ENCODE measurements at regions of chr1 and their contacts with region 1.

Region 1: DNA sequence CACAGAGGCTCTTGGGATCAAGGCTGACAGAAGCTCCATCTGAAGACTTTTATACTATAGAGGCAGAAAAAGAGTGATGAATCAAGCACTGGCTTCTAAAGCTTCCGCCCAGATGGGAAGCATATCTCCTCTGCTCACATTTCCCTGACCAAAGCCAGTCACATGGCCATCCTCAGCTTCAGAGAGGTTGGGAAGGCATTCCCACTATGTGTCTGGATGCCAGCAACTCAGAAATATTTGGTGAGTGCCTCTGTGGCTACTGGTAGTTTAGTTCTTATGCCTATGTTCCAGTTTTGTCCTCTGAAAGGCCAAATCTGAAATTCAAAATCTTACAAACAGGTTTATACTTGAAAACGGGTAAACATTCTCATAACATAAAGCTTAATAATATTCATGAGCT is 9.9 kb upstream of the DISC1 start:
- DNase-seq: no peak
- ATAC-seq: no peak
- H3K4me3 ChIP-seq: no peak overlapping the region
- H3K27ac ChIP-seq: no peak overlapping the region
- H3K4me1 ChIP-seq: no peaks in the 10 kb centered on the region
- CTCF ChIP-seq: no peak
- EP300 ChIP-seq: no peak
- POLR2A ChIP-seq: no peak
- RAD21 ChIP-seq: no peak

Region 2: DNA sequence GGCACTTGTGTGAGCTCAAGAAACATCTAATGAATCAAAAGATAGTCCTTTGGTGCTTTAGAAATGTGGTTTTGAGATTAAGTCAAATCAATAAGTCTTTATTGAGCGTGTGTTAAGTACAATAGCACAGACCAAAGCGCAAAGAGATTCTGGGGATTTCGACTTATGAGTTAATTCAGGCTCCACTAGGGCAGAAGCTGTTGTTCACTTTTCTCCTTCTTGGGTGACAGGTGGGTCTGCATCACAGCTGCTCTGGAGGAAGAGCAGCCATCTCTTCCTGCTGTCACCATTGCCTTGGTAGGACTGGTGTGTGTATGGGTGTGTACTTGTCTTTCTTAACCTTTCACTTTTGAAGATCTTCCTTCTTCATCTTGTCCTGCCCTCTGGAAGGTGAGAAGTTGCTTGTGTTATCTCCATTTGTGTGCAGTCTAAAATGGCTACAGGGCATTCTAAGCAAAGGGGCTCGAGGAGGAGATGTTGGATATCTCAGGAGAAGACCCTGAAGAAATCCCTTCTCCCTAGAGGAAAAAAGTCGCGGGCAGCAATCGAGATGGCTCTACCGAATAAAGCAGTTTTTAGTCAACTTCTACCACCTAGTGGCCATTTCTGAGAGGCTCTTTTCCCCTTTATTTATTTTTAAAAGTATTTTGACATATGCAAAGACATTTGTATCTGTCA is 12.9 kb before region 1 on chr1:
- CTCF ChIA-PET with region 1: interaction called, 10 read pairs
- POLR2A ChIA-PET with region 1: no interaction called
- DNase-seq: peak; percentile 57 to 79
- ATAC-seq: peak; percentile 86 to 91
- H3K4me3 ChIP-seq: peak overlapping the region; percentile 48
- H3K27ac ChIP-seq: peak overlapping the region; percentile 30 to 67; a peak in 5 of 6 replicates
- H3K4me1 ChIP-seq: 0 out of 3 replicates have a peak, but pooled peaks cover 4% of the 10 kb centered on the region
- CTCF ChIP-seq: peak; percentile 92
- EP300 ChIP-seq: no peak
- POLR2A ChIP-seq: no peak
- RAD21 ChIP-seq: peak; percentile 85 to 93

Measured in A549 (cell line).